CD4-positive, alpha-beta memory T cell (primary cell): ENCODE measurements at regions of chr3 and their contacts with region 1.

Region 1: GRCh38 chr3:50292159-50293078 is at the start of gene IFRD2:
- DNase-seq: peak; percentile 94 to 98 (median 95)
- H3K4me3 ChIP-seq: peak within 1 kb of the TSS; percentile 76
- H3K4me3 Mint-ChIP-seq: peak within 1 kb of the TSS; percentile 82 to 92 (median 88)
- H3K27ac ChIP-seq: peak within 1 kb of the TSS; percentile 68
- H3K27ac Mint-ChIP-seq: peak within 1 kb of the TSS; percentile 90 to 99 (median 98)
- H3K4me1 ChIP-seq: peaks cover 24% of the 10 kb centered on the region
- H3K4me1 Mint-ChIP-seq: peaks cover 12 to 39% (median 22%) of the 10 kb centered on the region in 4 donors
- H3K27me3 ChIP-seq: no peaks in the 10 kb centered on the region
- H3K27me3 Mint-ChIP-seq: no peaks in the 10 kb centered on the region
- total RNA-seq, gene IFRD2: 58.6 to 65.3 TPM

Region 2: DNA sequence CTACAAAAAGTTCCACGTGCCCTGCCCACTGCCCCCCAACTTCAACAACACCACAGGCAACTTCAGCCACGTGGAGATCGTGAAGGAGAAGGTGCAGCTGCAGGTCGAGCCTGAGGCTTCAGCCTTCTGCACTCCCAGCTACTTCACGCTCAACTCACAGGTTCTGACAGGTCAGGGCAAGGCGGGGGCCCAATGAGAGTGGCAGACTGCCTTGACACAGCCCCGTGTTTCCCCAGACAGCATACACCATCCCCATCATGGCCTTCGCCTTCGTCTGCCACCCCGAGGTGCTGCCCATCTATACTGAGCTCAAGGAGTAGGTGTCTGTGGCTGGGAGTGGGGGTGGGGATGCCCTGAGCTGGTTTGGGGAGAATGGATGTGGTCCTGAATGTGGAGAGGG is 74.7 kb before region 1 on chr3:
- CTCF ChIA-PET with region 1: no interaction called
- POLR2A ChIA-PET with region 1: no interaction called
- intact Hi-C with region 1: no loop called
- DNase-seq: no peak
- H3K4me3 ChIP-seq: no peak overlapping the region
- H3K4me3 Mint-ChIP-seq: no peak overlapping the region
- H3K27ac ChIP-seq: no peak overlapping the region
- H3K27ac Mint-ChIP-seq: peak overlapping the region in 1 of 7 donors; percentile 8
- H3K4me1 ChIP-seq: no peaks in the 10 kb centered on the region
- H3K4me1 Mint-ChIP-seq: peaks cover 0 to 5% (median 0%) of the 10 kb centered on the region in 4 donors
- H3K27me3 ChIP-seq: no peaks in the 10 kb centered on the region
- H3K27me3 Mint-ChIP-seq: peaks cover 0 to 3% of the 10 kb centered on the region in 2 donors

Region 3: GRCh38 chr3:50235716-50236496 is 56.5 kb before region 1 on chr3 and contains the start of gene GNAI2:
- CTCF ChIA-PET with region 1: no interaction called
- POLR2A ChIA-PET with region 1: interaction called, 14 read pairs
- intact Hi-C with region 1: loop called (anchors 1 kb)
- DNase-seq: peak; percentile 99
- H3K4me3 ChIP-seq: peak within 1 kb of the TSS; percentile 75 to 94
- H3K4me3 Mint-ChIP-seq: peak within 1 kb of the TSS; percentile 96 to 99 (median 98)
- H3K27ac ChIP-seq: peak within 1 kb of the TSS; percentile 76
- H3K27ac Mint-ChIP-seq: peak within 1 kb of the TSS; percentile 91 to 97 (median 94)
- H3K4me1 ChIP-seq: peaks cover 40% of the 10 kb centered on the region
- H3K4me1 Mint-ChIP-seq: peaks cover 20 to 58% (median 35%) of the 10 kb centered on the region in 4 donors
- H3K27me3 ChIP-seq: no peaks in the 10 kb centered on the region
- H3K27me3 Mint-ChIP-seq: no peaks in the 10 kb centered on the region
- total RNA-seq, gene GNAI2: 292 to 300 TPM

Region 4: GRCh38 chr3:50245831-50246516 is 46.4 kb before region 1 on chr3:
- CTCF ChIA-PET with region 1: interaction called, 7 read pairs
- POLR2A ChIA-PET with region 1: interaction called, 7 read pairs
- intact Hi-C with region 1: loop called (anchors 1 kb)
- DNase-seq: peak; percentile 89 to 94 (median 92)
- H3K4me3 ChIP-seq: peak overlapping the region; percentile 24 to 44
- H3K4me3 Mint-ChIP-seq: peak overlapping the region; percentile 75 to 88 (median 80)
- H3K27ac ChIP-seq: peak overlapping the region; percentile 76
- H3K27ac Mint-ChIP-seq: peak overlapping the region; percentile 92 to 98 (median 95)
- H3K4me1 ChIP-seq: peaks cover 97% of the 10 kb centered on the region
- H3K4me1 Mint-ChIP-seq: peaks cover 44 to 89% (median 71%) of the 10 kb centered on the region in 4 donors
- H3K27me3 ChIP-seq: no peaks in the 10 kb centered on the region
- H3K27me3 Mint-ChIP-seq: no peaks in the 10 kb centered on the region

Region 5: DNA sequence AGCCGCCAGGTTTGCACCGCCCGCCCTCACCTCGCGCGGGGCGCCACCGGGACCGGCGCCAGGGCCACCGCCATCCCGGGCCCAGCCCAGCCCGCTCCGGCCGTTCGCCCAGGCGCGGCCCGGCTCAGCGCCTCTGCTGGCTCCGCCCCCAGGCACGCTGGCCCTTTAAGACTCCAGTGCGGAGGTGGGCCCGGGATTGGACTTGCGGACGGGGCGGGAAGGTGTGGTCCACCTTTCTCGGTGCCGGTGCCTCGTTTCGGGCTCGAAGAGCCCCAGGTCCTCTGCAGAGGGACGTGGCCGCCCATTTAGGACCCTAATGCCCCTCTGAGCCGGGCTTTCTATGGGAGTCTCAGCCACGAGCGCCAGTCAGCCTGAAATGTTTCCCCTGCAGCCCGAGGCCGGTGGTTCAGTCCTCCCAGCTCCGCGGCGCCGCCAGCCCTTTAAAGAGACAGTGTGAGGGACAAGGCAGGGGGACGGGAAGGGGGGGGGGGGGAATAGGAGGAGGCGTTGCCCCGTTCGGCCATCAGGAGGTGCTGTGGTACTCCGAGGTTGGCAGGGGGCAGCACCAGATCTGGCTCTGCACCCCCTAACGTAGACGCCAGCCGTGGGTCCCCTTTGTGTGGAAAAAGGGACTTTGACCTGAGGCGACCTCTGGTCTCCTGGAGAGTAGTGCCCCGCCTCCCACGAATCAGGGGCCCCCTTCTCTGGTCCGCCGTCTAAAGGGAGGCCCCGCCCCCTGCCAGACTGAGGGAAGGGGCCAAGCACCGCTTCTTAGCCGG is 29.1 kb after region 1 on chr3:
- CTCF ChIA-PET with region 1: interaction called, 37 read pairs
- POLR2A ChIA-PET with region 1: interaction called, 94 read pairs
- intact Hi-C with region 1: loop called (anchors 1 kb)
- DNase-seq: peak; percentile 80 to 88 (median 83)
- H3K4me3 ChIP-seq: peak overlapping the region; percentile 23 to 87
- H3K4me3 Mint-ChIP-seq: peak overlapping the region; percentile 80 to 90 (median 86)
- H3K27ac ChIP-seq: peak overlapping the region; percentile 73
- H3K27ac Mint-ChIP-seq: peak overlapping the region; percentile 90 to 95 (median 93)
- H3K4me1 ChIP-seq: peaks cover 38% of the 10 kb centered on the region
- H3K4me1 Mint-ChIP-seq: peaks cover 18 to 57% (median 38%) of the 10 kb centered on the region in 4 donors
- H3K27me3 ChIP-seq: no peaks in the 10 kb centered on the region
- H3K27me3 Mint-ChIP-seq: no peaks in the 10 kb centered on the region

Region 6: GRCh38 chr3:50327943-50328691 is 35.7 kb after region 1 on chr3 and contains the start of gene TUSC2:
- CTCF ChIA-PET with region 1: interaction called, 37 read pairs
- POLR2A ChIA-PET with region 1: interaction called, 178 read pairs
- intact Hi-C with region 1: loop called (anchors 1 kb)
- DNase-seq: peak; percentile 91 to 96 (median 93)
- H3K4me3 ChIP-seq: peak within 1 kb of the TSS; percentile 73 to 91
- H3K4me3 Mint-ChIP-seq: peak within 1 kb of the TSS; percentile 91 to 97 (median 94)
- H3K27ac ChIP-seq: peak within 1 kb of the TSS; percentile 82
- H3K27ac Mint-ChIP-seq: peak within 1 kb of the TSS; percentile 93 to 97 (median 97)
- H3K4me1 ChIP-seq: peaks cover 22% of the 10 kb centered on the region
- H3K4me1 Mint-ChIP-seq: peaks cover 13 to 42% (median 23%) of the 10 kb centered on the region in 4 donors
- H3K27me3 ChIP-seq: no peaks in the 10 kb centered on the region
- H3K27me3 Mint-ChIP-seq: no peaks in the 10 kb centered on the region
- total RNA-seq, gene TUSC2: 25.3 to 30.0 TPM

Region 7: GRCh38 chr3:50350527-50351322 is 58.3 kb after region 1 on chr3 and contains the starts of genes CYB561D2 and NPRL2:
- CTCF ChIA-PET with region 1: interaction called, 3 read pairs
- POLR2A ChIA-PET with region 1: interaction called, 18 read pairs
- intact Hi-C with region 1: loop called (anchors 1 kb)
- DNase-seq: peak; percentile 99 to 100 (median 99)
- H3K4me3 ChIP-seq: peak within 1 kb of the TSS; percentile 66 to 98
- H3K4me3 Mint-ChIP-seq: peak within 1 kb of the TSS; percentile 91 to 99 (median 96)
- H3K27ac ChIP-seq: peak within 1 kb of the TSS; percentile 94
- H3K27ac Mint-ChIP-seq: peak within 1 kb of the TSS; percentile 96 to 99 (median 99)
- H3K4me1 ChIP-seq: peaks cover 58% of the 10 kb centered on the region
- H3K4me1 Mint-ChIP-seq: peaks cover 28 to 78% (median 53%) of the 10 kb centered on the region in 4 donors
- H3K27me3 ChIP-seq: no peaks in the 10 kb centered on the region
- H3K27me3 Mint-ChIP-seq: no peaks in the 10 kb centered on the region
- total RNA-seq, gene CYB561D2: 39.6 to 40.0 TPM
- total RNA-seq, gene NPRL2: 50.0 to 53.0 TPM

Region 8: DNA sequence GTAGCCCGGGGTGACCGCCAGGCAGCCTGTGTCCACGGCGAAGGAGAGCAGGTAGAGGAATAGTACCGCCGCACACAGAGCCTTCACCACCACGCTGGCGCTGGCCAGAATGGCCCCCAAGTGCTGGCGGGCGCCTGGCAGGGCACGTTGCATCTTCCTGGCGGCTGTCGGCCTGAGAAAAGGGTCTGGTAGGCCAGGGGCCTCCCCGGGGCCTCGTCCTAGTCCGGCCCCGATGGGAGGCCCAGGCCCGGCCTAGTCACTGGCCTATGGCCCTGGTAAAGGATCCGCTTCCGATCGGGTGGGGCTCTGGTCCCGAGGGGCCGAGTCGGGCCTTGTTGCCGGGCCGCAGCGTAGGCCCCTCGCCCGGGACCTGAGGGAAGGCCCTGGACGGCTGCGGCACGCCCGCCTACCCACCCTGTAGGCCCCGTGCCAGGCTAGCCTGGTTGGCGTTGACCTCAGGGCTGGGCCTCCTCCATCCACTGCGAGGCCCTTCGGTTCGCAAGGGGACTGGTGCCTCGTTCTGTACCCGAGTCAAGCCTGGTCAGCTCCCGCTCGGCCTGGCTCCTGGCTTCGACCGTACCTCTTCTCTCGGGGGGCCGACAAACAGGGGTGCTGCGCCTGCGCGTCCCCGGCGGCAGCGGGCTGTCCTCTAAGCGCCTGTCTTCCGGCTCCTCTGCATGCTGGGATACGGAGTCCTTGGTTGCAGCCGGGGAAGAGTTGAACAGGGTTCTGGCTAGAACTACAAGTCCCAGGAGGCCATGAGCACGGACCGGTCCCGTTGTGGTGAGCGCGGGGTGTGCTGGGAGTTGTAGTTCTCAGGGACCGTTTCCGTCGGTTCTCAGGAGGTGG is 66.7 kb after region 1 on chr3 and contains the start of gene TMEM115:
- CTCF ChIA-PET with region 1: no interaction called
- POLR2A ChIA-PET with region 1: interaction called, 4 read pairs
- intact Hi-C with region 1: loop called (anchors 1 kb)
- DNase-seq: peak; percentile 93 to 99 (median 96)
- H3K4me3 ChIP-seq: peak within 1 kb of the TSS; percentile 78 to 95
- H3K4me3 Mint-ChIP-seq: peak within 1 kb of the TSS; percentile 95 to 100 (median 98)
- H3K27ac ChIP-seq: peak within 1 kb of the TSS; percentile 97
- H3K27ac Mint-ChIP-seq: peak within 1 kb of the TSS; percentile 96 to 98 (median 98)
- H3K4me1 ChIP-seq: peaks cover 44% of the 10 kb centered on the region
- H3K4me1 Mint-ChIP-seq: peaks cover 30 to 49% (median 39%) of the 10 kb centered on the region in 4 donors
- H3K27me3 ChIP-seq: no peaks in the 10 kb centered on the region
- H3K27me3 Mint-ChIP-seq: no peaks in the 10 kb centered on the region
- total RNA-seq, gene TMEM115: 31.1 to 34.6 TPM

Region 9: GRCh38 chr3:50442945-50443579 is 150.6 kb after region 1 on chr3:
- CTCF ChIA-PET with region 1: no interaction called
- POLR2A ChIA-PET with region 1: no interaction called
- intact Hi-C with region 1: no loop called
- DNase-seq: no peak
- H3K4me3 ChIP-seq: no peak overlapping the region
- H3K4me3 Mint-ChIP-seq: no peak overlapping the region
- H3K27ac ChIP-seq: no peak overlapping the region
- H3K27ac Mint-ChIP-seq: no peak overlapping the region
- H3K4me1 ChIP-seq: no peaks in the 10 kb centered on the region
- H3K4me1 Mint-ChIP-seq: peaks cover 0 to 1% (median 0%) of the 10 kb centered on the region in 4 donors
- H3K27me3 ChIP-seq: no peaks in the 10 kb centered on the region
- H3K27me3 Mint-ChIP-seq: no peaks in the 10 kb centered on the region

Region 10: DNA sequence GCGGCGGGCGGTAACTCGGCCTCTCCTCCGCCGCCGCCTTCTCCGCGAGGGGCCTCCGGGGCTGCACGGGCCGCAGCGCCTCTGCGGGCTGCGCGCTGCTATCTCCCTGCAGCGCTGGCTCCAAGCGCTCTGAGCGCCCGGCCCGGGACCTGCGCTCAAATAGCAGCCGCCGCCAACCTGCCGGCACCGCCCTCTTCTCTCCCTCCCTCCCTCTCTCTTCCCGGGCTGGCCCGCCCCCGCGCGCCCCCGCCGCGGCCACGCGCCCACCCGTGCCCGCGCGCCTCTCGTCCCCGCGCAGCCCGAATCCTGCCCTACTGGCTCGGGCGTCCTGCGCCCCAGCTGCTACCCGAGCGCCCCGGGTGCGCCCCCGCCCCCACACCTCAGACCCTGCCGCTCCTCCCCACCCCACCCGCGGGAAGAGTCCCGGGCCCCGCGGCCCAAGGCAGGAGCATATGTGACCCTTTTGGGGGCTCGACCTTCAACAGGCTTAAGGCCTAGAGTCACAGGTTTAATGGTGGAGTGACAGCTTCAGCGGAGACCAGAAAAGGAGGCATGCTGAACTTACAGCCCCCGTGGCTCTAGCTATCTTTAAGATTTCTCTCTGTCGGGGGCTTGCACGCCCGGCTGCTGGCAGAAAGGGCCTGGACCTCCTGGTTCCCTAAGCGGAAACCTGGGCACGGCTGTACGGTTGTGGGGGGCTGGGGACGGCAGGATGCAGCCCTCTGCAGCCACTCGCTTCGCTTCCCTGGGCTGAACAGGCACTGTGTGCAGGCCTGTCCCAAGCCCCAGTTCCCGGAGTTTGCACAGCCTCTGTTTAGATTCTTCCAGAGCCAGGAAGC is 211.3 kb after region 1 on chr3 and contains the start of gene CACNA2D2:
- CTCF ChIA-PET with region 1: no interaction called
- POLR2A ChIA-PET with region 1: no interaction called
- intact Hi-C with region 1: no loop called
- DNase-seq: peak; percentile 70 to 76 (median 71)
- H3K4me3 ChIP-seq: peak within 1 kb of the TSS in 1 of 2 donors; percentile 32
- H3K4me3 Mint-ChIP-seq: peak within 1 kb of the TSS; percentile 69 to 85 (median 74)
- H3K27ac ChIP-seq: no peak within 1 kb of the TSS
- H3K27ac Mint-ChIP-seq: peak within 1 kb of the TSS in 1 of 7 donors; percentile 54
- H3K4me1 ChIP-seq: peaks cover 9% of the 10 kb centered on the region
- H3K4me1 Mint-ChIP-seq: peaks cover 2 to 18% (median 9%) of the 10 kb centered on the region in 4 donors
- H3K27me3 ChIP-seq: no peaks in the 10 kb centered on the region
- H3K27me3 Mint-ChIP-seq: peaks cover 6 to 13% of the 10 kb centered on the region in 2 donors
- total RNA-seq, gene CACNA2D2: 1.7 to 1.9 TPM